Heart right ventricle (tissue), 16 donors: ENCODE measurements at regions of chr19 and their contacts with region 1.

Region 1: GRCh38 chr19:56838909-56839651 is 1.4 kb downstream of the PEG3 start:
- DNase-seq: peak; percentile 94 to 98
- ATAC-seq: peak; percentile 56 to 82 (median 73)
- H3K4me3 ChIP-seq: peak overlapping the region; percentile 19 to 70 (median 60)
- H3K27ac ChIP-seq: peak overlapping the region in 9 of 10 donors; percentile 35 to 91 (median 82)
- H3K4me1 ChIP-seq: peaks cover 0 to 22% (median 4%) of the 10 kb centered on the region in 9 donors
- H3K27me3 ChIP-seq: peaks cover 0 to 21% (median 0%) of the 10 kb centered on the region in 7 donors
- CTCF ChIP-seq: no peak

Region 2: DNA sequence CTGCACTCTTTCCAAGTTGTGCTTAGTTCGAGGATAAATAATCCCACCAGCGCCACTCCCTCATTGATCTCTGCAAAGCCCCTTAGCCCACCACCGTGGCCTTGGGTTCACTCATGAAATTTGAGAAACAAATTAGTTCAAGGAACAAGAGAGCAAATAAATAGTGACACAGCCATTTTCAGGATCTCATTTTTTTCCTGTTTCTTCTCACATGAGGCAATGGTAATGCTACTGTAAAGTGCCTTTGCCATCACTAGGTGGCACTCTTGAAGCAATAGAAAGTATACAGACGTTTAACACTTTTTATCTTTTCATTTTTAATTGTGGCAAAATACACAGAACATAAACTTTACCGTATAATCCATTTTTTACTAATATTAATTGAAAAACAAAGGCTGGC is 90.7 kb before region 1 on chr19:
- intact Hi-C with region 1: loop called in 4 of 10 experiments (anchors 2 to 10 kb)
- DNase-seq: no peak
- ATAC-seq: no peak
- H3K4me3 ChIP-seq: no peak overlapping the region
- H3K27ac ChIP-seq: no peak overlapping the region
- H3K4me1 ChIP-seq: no peaks in the 10 kb centered on the region
- H3K27me3 ChIP-seq: peaks cover 0 to 20% (median 4%) of the 10 kb centered on the region in 7 donors
- CTCF ChIP-seq: peak; percentile 23 to 75 (median 61)

Region 3: DNA sequence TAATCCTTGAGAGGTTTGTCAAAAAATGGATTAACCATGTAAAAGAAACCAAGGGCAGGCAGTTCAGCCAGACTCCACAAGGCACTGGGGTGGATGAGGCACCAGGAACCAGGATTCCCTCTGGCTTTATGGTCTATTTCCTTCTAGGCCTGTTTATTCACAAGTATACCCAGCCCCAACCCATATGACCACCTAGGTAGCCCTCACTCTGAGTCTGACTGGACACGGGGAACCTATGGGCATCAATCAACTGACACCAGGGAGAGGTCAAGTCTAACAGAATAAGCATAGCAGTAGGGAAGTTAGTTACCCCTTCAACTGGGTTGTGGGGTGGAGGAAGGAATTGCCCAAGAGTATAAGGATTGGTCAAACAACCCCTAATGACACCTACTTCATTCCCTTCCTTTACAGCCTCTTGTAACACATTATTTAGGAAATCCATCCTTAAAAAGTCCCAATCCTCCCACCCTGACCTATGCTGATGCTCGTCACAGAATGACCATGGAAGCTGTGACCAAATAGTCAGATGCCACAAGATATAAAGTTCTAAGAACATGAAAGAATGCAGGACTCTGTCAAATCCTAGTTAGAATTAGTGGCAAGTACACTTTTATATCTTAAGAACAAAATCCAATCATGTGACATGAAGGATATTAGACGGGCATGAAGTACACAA is 30.2 kb before region 1 on chr19:
- intact Hi-C with region 1: no loop called
- DNase-seq: no peak
- ATAC-seq: no peak
- H3K4me3 ChIP-seq: no peak overlapping the region
- H3K27ac ChIP-seq: no peak overlapping the region
- H3K4me1 ChIP-seq: no peaks in the 10 kb centered on the region
- H3K27me3 ChIP-seq: no peaks in the 10 kb centered on the region
- CTCF ChIP-seq: no peak

Region 4: GRCh38 chr19:56885173-56885987 is 46.3 kb after region 1 on chr19:
- intact Hi-C with region 1: no loop called
- DNase-seq: no peak
- ATAC-seq: no peak
- H3K4me3 ChIP-seq: no peak overlapping the region
- H3K27ac ChIP-seq: no peak overlapping the region
- H3K4me1 ChIP-seq: no peaks in the 10 kb centered on the region
- H3K27me3 ChIP-seq: peaks cover 0 to 32% (median 12%) of the 10 kb centered on the region in 7 donors
- CTCF ChIP-seq: no peak